ENCODE measurements at regions of chr6 and their contacts with region 1.

Region 1: DNA sequence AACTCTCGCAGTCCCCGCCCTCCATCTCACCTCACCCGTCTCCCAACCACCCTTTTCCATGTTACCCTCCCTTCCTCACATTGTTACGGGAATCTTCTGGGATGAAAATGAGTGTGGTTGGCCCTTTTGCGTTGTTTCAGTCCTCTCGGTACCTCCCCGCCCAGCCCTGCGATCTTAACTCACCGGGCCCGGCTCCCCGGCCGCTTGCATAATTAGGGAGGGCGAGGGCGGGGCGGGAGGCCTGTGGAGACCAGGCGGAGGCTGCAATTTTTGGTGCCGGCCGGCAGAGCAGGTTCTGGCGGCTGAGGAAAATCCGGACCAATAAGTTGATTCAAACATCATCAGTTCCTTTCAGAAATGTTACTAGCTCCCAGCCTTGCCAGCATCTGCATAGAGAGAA is 25.2 kb downstream of the TFAP2B start:
- ATAC-seq: peak in 2 of 8 experiments; percentile 61 to 63
- H3K4me3 ChIP-seq: no peak overlapping the region
- H3K27ac ChIP-seq: no peak overlapping the region
- H3K4me1 ChIP-seq: peaks cover 0 to 6% of the 10 kb centered on the region in 2 donors

Region 2: GRCh38 chr6:50720623-50721022 is 123.2 kb before region 1 on chr6:
- in situ Hi-C with region 1: loop called in 1 of 9 experiments (anchors 25 kb)
- ATAC-seq: peak in 1 of 8 experiments; percentile 66
- H3K4me3 ChIP-seq: no peak overlapping the region
- H3K27ac ChIP-seq: no peak overlapping the region
- H3K4me1 ChIP-seq: no peaks in the 10 kb centered on the region

Region 3: GRCh38 chr6:51019806-51020205 is 176.0 kb after region 1 on chr6:
- in situ Hi-C with region 1: no loop called
- ATAC-seq: no peak
- H3K4me3 ChIP-seq: no peak overlapping the region
- H3K27ac ChIP-seq: no peak overlapping the region
- H3K4me1 ChIP-seq: peaks cover 0 to 8% of the 10 kb centered on the region in 2 donors

Measured in motor neuron (in vitro differentiated cells).